ENCODE measurements at regions of chr16 and their contacts with region 1.

Region 1: GRCh38 chr16:28531777-28532744 is 6.7 kb downstream of the NUPR1 start:
- DNase-seq: no peak
- H3K4me3 ChIP-seq: no peak overlapping the region
- H3K4me3 Mint-ChIP-seq: peak overlapping the region in 2 of 8 donors; percentile 5 to 50
- H3K27ac ChIP-seq: no peak overlapping the region
- H3K27ac Mint-ChIP-seq: peak overlapping the region in 5 of 7 donors; percentile 10 to 92 (median 86)
- H3K4me1 ChIP-seq: peaks cover 38% of the 10 kb centered on the region
- H3K4me1 Mint-ChIP-seq: peaks cover 25 to 45% (median 36%) of the 10 kb centered on the region in 4 donors
- H3K27me3 ChIP-seq: no peaks in the 10 kb centered on the region
- H3K27me3 Mint-ChIP-seq: no peaks in the 10 kb centered on the region

Region 2: GRCh38 chr16:28504707-28505409 is 27.2 kb before region 1 on chr16:
- CTCF ChIA-PET with region 1: no interaction called
- POLR2A ChIA-PET with region 1: interaction called, 12 read pairs
- intact Hi-C with region 1: no loop called
- DNase-seq: no peak
- H3K4me3 ChIP-seq: no peak overlapping the region
- H3K4me3 Mint-ChIP-seq: no peak overlapping the region
- H3K27ac ChIP-seq: no peak overlapping the region
- H3K27ac Mint-ChIP-seq: no peak overlapping the region
- H3K4me1 ChIP-seq: peaks cover 15% of the 10 kb centered on the region
- H3K4me1 Mint-ChIP-seq: peaks cover 8 to 20% (median 11%) of the 10 kb centered on the region in 4 donors
- H3K27me3 ChIP-seq: no peaks in the 10 kb centered on the region
- H3K27me3 Mint-ChIP-seq: no peaks in the 10 kb centered on the region

Region 3: DNA sequence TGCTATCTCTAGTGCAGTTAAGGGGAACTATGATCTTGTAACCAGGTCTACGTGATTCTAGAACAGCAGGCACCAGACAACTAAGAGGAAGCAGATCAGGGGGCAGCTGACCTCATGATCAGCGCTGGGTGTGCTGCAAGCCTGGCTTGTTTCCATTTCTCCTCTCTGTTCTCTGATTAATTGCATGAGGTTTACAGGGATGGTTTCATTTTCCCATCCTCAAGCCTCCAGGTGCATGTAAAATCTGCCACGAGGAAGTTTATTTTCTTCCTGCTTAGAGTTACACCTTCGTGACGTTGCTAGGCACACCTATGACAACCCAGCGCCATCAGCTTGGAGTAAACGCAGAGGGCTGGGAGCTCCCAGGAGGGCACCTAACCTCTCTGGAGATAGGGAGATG is 11.0 kb after region 1 on chr16:
- CTCF ChIA-PET with region 1: interaction called, 4 read pairs
- POLR2A ChIA-PET with region 1: interaction called, 20 read pairs
- intact Hi-C with region 1: no loop called
- DNase-seq: no peak
- H3K4me3 ChIP-seq: no peak overlapping the region
- H3K4me3 Mint-ChIP-seq: no peak overlapping the region
- H3K27ac ChIP-seq: no peak overlapping the region
- H3K27ac Mint-ChIP-seq: peak overlapping the region in 4 of 7 donors; percentile 9 to 70 (median 32)
- H3K4me1 ChIP-seq: no peaks in the 10 kb centered on the region
- H3K4me1 Mint-ChIP-seq: peaks cover 5 to 15% (median 10%) of the 10 kb centered on the region in 4 donors
- H3K27me3 ChIP-seq: no peaks in the 10 kb centered on the region
- H3K27me3 Mint-ChIP-seq: peaks cover 0 to 2% of the 10 kb centered on the region in 2 donors

Region 4: DNA sequence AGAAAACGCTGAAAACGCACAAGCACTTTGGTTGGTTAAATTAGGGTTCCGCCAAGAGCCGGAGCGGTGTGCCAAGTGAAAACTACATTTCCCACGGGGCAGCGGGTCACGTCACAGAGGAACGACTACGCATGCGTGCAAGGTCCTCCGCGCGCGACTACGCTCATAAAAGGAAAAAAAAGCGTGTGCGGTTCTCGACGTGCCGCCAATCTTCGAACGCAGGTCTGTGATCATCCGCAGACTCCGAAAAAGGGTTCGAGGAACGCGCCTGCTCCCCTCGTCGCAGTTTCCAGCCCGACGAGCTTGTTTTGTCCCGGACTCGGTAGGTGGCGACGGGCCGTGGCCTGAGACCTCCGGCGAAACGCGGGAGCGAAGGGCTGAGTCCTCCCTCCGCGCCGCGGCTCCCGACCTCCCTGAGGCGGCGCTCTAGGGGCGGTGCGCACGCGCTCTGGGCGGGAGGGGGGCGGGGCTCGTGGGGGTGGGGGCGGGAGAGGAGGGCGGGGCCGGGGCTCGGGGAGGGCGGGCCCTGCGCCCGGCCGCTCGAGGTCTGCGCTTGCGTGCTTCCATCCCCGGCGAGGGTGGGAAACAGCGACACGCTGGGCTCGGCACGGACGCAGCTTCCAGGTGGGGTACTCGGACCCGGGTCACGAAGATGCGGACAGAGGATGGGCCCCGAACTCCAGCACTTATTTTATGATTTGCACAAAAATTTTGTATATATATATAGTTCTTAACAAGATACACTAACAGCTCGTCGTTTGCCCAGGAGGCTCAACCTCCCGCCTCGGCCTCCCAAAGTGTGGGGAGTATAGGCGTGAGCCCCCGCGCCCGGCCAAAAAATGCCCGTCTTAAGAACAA is 21.9 kb after region 1 on chr16 and contains the start of gene SGF29:
- CTCF ChIA-PET with region 1: interaction called, 7 read pairs
- POLR2A ChIA-PET with region 1: interaction called, 45 read pairs
- intact Hi-C with region 1: no loop called
- DNase-seq: peak; percentile 94 to 96 (median 96)
- H3K4me3 ChIP-seq: peak within 1 kb of the TSS; percentile 50 to 90
- H3K4me3 Mint-ChIP-seq: peak within 1 kb of the TSS; percentile 79 to 96 (median 92)
- H3K27ac ChIP-seq: peak within 1 kb of the TSS; percentile 95
- H3K27ac Mint-ChIP-seq: peak within 1 kb of the TSS; percentile 95 to 99 (median 98)
- H3K4me1 ChIP-seq: peaks cover 35% of the 10 kb centered on the region
- H3K4me1 Mint-ChIP-seq: peaks cover 21 to 46% (median 33%) of the 10 kb centered on the region in 4 donors
- H3K27me3 ChIP-seq: no peaks in the 10 kb centered on the region
- H3K27me3 Mint-ChIP-seq: no peaks in the 10 kb centered on the region
- total RNA-seq, gene SGF29: 67.5 to 70.0 TPM